WTC11 (cell line): ENCODE measurements at regions of chr14 and their contacts with region 1.

Region 1: GRCh38 chr14:77314043-77314442 is 6.6 kb downstream of the POMT2 start:
- DNase-seq: no peak
- ATAC-seq: peak; percentile 78
- H3K4me3 Mint-ChIP-seq: no peak overlapping the region
- H3K27ac Mint-ChIP-seq: peak overlapping the region; percentile 97
- H3K4me1 Mint-ChIP-seq: peaks cover 34% of the 10 kb centered on the region
- H3K27me3 Mint-ChIP-seq: no peaks in the 10 kb centered on the region
- CTCF ChIP-seq: no peak

Region 2: GRCh38 chr14:77139540-77140358 is 174.3 kb before region 1 on chr14:
- CTCF ChIA-PET with region 1: interaction called, 15 read pairs
- POLR2A ChIA-PET with region 1: no interaction called
- DNase-seq: peak; percentile 90
- ATAC-seq: peak; percentile 58
- H3K4me3 Mint-ChIP-seq: peak overlapping the region; percentile 92
- H3K27ac Mint-ChIP-seq: peak overlapping the region; percentile 32; the same call in 1 of the 2 replicates
- H3K4me1 Mint-ChIP-seq: peaks cover 42% of the 10 kb centered on the region
- H3K27me3 Mint-ChIP-seq: peaks cover 4% of the 10 kb centered on the region; the same call in 1 of the 2 replicates
- CTCF ChIP-seq: peak; percentile 75

Region 3: DNA sequence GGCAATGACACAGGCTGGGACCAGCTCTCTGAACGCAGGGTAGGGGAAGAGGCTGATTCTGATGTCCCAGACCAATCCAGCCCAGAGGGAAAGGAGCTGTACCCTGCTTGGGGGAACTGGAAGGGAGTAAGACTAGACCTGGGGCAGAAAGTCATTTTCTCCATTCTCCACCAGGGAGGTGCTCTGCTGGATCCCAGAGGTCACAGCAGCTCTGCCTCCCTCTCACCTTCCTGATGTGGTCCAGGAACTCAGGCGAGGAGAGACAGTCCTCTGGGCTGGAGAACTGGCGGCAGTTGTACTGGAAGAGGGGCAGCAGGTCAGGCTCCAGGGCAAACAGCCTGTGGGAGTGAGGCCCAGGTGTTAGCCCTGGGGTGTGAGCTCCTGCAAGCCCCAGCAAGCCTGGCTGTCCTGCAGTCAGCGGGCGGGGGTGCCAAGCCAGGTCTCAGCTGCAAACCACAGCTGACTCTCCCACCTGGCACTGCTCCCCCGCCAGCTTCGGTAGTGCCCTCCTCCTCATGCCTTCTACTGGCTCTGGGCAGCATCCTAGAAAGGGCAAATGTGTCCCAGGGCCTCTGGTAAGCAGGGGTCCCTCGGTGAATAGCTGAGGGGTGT is 44.9 kb before region 1 on chr14:
- CTCF ChIA-PET with region 1: interaction called, 19 read pairs
- POLR2A ChIA-PET with region 1: no interaction called
- DNase-seq: no peak
- ATAC-seq: peak; percentile 31
- H3K4me3 Mint-ChIP-seq: no peak overlapping the region; the same call in 1 of the 2 replicates
- H3K27ac Mint-ChIP-seq: no peak overlapping the region
- H3K4me1 Mint-ChIP-seq: peaks cover 8% of the 10 kb centered on the region
- H3K27me3 Mint-ChIP-seq: peaks cover 61% of the 10 kb centered on the region
- CTCF ChIP-seq: no peak

Region 4: DNA sequence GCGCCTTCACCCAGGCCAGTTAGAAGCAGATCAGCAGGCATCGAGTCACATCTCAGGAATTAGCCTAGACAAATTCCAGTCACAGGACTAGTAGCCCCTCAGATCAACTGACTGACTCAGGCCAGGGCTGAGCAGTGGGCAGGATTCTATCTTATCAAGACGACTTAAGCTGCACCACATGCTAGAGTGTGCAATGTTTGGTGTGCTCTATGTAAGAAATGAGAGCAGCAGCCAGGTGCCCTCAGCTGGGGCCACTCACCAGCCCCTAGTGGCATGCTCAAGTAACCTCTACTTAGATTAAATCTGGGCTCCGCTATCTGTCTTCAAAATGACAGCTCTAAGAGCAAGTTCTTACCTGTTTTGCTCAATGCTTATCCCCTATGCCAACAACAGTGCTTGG is 23.3 kb before region 1 on chr14:
- CTCF ChIA-PET with region 1: interaction called, 17 read pairs
- POLR2A ChIA-PET with region 1: no interaction called
- DNase-seq: no peak
- ATAC-seq: peak; percentile 60
- H3K4me3 Mint-ChIP-seq: no peak overlapping the region
- H3K27ac Mint-ChIP-seq: no peak overlapping the region
- H3K4me1 Mint-ChIP-seq: peaks cover 8% of the 10 kb centered on the region
- H3K27me3 Mint-ChIP-seq: no peaks in the 10 kb centered on the region
- CTCF ChIP-seq: no peak

Region 5: DNA sequence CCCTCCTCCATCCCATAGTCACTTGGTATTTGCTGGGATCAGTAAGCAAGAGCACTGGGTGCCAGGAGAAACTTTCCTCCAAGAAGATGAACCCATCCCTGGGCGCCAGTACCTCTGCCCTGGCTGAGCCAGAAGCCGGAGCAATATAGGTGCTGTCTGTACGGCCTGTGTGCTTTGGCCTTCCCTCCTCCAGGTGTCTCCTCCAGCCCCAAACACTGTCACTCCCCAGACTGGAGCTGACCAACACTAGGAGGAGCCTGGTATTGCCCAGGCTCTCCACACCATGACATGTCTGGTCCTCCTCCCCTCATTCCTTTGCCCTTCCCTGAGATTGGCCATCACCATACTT is 11.7 kb after region 1 on chr14:
- CTCF ChIA-PET with region 1: interaction called, 15 read pairs
- POLR2A ChIA-PET with region 1: no interaction called
- DNase-seq: no peak
- ATAC-seq: peak; percentile 7
- H3K4me3 Mint-ChIP-seq: no peak overlapping the region
- H3K27ac Mint-ChIP-seq: peak overlapping the region; percentile 67
- H3K4me1 Mint-ChIP-seq: peaks cover 38% of the 10 kb centered on the region
- H3K27me3 Mint-ChIP-seq: no peaks in the 10 kb centered on the region; the same call in 1 of the 2 replicates
- CTCF ChIP-seq: no peak

Region 6: GRCh38 chr14:77390188-77390587 is 76.1 kb after region 1 on chr14:
- CTCF ChIA-PET with region 1: no interaction called
- POLR2A ChIA-PET with region 1: no interaction called
- DNase-seq: no peak
- ATAC-seq: no peak
- H3K4me3 Mint-ChIP-seq: no peak overlapping the region
- H3K27ac Mint-ChIP-seq: no peak overlapping the region
- H3K4me1 Mint-ChIP-seq: no peaks in the 10 kb centered on the region
- H3K27me3 Mint-ChIP-seq: no peaks in the 10 kb centered on the region
- CTCF ChIP-seq: no peak

Region 7: DNA sequence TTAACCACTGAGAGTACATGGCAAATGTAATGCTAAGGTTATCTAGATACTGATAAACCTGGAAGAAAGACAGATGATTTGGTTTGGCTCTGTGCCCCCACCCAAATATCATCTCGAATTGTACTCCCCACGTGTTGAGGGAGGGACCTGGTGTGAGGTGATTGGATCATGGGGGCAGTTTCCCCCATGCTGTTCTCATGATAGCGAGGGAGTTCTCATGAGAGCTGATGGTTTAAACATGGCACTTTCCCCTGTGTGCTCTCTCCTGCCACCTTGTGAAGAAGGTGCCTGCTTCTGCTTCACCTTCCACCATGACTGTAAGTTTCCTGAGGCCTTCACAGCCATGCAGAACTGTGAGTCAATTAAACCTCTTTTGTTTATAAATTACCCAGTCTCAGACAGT is 95.1 kb after region 1 on chr14:
- CTCF ChIA-PET with region 1: interaction called, 12 read pairs
- POLR2A ChIA-PET with region 1: no interaction called
- DNase-seq: peak; percentile 20
- ATAC-seq: peak; percentile 94
- H3K4me3 Mint-ChIP-seq: no peak overlapping the region
- H3K27ac Mint-ChIP-seq: no peak overlapping the region
- H3K4me1 Mint-ChIP-seq: no peaks in the 10 kb centered on the region
- H3K27me3 Mint-ChIP-seq: no peaks in the 10 kb centered on the region
- CTCF ChIP-seq: no peak